ENCODE measurements at regions of chr11 and their contacts with region 1.

Region 1: GRCh38 chr11:64778508-64779346 is at the start of gene SF1:
- DNase-seq: peak; percentile 99
- ATAC-seq: peak; percentile 91
- H3K4me3 Mint-ChIP-seq: peak within 1 kb of the TSS; percentile 97
- H3K27ac Mint-ChIP-seq: peak within 1 kb of the TSS; percentile 99
- H3K4me1 Mint-ChIP-seq: peaks cover 57% of the 10 kb centered on the region
- H3K27me3 Mint-ChIP-seq: no peaks in the 10 kb centered on the region
- total RNA-seq, gene SF1: 318 to 362 TPM

Region 2: DNA sequence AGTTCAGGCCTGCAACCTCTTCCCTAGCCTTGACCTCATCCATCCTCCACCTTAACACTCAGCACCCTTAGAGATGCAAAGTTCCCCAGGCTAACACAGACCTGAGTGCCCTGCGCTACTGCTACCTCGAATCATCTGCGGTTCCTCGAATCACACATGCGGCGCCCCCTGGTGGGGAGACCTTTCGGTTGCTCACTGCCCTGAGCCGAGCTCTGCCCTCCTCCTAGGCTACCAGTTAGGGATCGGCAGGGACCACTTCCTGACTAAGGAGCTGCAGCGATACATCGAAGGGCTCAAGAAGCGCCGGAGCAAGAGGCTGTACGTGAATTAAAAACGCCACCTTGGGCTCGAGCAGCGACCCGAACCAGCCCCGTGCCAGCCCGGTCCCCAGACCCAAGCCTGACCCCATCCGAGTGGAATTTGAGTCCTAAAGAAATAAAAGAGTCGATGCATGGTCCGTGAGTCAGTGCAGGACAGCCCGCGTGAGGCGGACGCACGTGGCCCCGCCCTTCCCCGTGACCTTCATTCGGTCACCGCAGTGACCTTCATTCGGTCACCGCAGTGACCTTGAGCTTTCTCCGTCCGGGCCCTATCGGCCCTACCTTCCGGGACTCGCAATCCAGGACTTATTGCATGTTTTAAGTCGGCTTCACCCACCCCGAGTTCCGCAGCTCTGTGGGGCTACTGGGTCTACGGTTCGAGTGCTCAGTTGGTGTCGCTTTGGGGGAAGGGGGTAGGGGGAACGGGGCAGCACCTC is 474.2 kb before region 1 on chr11:
- CTCF ChIA-PET with region 1: interaction called, 5 read pairs
- POLR2A ChIA-PET with region 1: interaction called, 5 read pairs
- intact Hi-C with region 1: loop called in 1 of 2 experiments (anchors 1 kb)
- DNase-seq: peak; percentile 99
- ATAC-seq: peak; percentile 49
- H3K4me3 Mint-ChIP-seq: peak overlapping the region; percentile 100
- H3K27ac Mint-ChIP-seq: peak overlapping the region; percentile 95
- H3K4me1 Mint-ChIP-seq: peaks cover 34% of the 10 kb centered on the region
- H3K27me3 Mint-ChIP-seq: peaks cover 14% of the 10 kb centered on the region

Region 3: GRCh38 chr11:64767344-64768299 is 11.1 kb before region 1 on chr11:
- CTCF ChIA-PET with region 1: interaction called, 38 read pairs
- POLR2A ChIA-PET with region 1: interaction called, 17 read pairs
- intact Hi-C with region 1: loop called in 1 of 2 experiments (anchors 1 kb)
- DNase-seq: peak; percentile 90
- ATAC-seq: peak; percentile 50
- H3K4me3 Mint-ChIP-seq: no peak overlapping the region
- H3K27ac Mint-ChIP-seq: peak overlapping the region; percentile 88
- H3K4me1 Mint-ChIP-seq: peaks cover 91% of the 10 kb centered on the region
- H3K27me3 Mint-ChIP-seq: no peaks in the 10 kb centered on the region

Region 4: GRCh38 chr11:64878494-64879243 is 99.9 kb after region 1 on chr11 and contains the start of gene EHD1:
- CTCF ChIA-PET with region 1: no interaction called
- POLR2A ChIA-PET with region 1: no interaction called
- intact Hi-C with region 1: loop called (anchors 1 to 5 kb)
- DNase-seq: peak; percentile 100
- ATAC-seq: peak; percentile 85
- H3K4me3 Mint-ChIP-seq: peak within 1 kb of the TSS; percentile 92
- H3K27ac Mint-ChIP-seq: peak within 1 kb of the TSS; percentile 97
- H3K4me1 Mint-ChIP-seq: peaks cover 60% of the 10 kb centered on the region
- H3K27me3 Mint-ChIP-seq: no peaks in the 10 kb centered on the region
- total RNA-seq, gene EHD1: 71.0 to 73.6 TPM

Region 5: DNA sequence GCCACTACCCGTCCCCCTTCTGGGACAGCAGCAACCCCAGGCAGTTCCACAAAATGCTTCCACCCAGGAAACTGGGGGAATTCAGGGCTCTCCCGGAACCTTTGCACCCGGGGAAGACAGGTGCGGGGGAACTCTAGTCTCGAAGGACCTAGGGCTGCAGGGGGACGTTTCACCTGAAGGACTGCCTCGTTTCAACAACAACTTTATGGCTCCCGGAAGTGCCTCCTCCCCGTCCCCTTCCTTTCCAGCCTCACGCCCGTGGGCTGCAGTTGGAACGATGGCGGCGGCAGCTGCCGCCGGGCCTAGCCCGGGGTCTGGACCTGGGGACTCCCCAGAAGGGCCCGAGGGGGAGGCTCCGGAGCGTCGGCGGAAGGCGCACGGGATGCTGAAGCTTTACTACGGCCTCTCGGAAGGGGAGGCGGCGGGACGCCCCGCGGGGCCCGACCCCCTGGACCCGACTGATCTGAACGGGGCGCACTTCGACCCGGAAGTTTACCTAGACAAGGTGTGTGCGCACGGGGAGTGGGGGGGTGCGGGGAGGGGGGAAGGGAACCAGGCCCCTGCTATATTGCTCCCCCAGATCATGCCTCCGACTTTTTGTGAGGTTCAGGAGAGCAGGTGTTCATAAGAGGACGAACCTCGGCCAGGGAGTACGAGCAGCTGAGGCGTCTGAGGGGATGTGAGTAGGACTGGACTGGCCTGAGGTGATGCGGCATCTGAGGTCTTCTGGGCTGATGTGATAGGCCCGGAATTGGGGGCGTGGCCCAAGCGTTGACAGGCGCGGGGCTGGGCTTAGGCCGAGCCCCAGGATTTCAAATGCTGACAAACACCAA is 317.5 kb after region 1 on chr11 and contains the start of gene VPS51:
- CTCF ChIA-PET with region 1: no interaction called
- POLR2A ChIA-PET with region 1: no interaction called
- intact Hi-C with region 1: loop called in 1 of 2 experiments (anchors 1 kb)
- DNase-seq: peak; percentile 93
- ATAC-seq: peak; percentile 98
- H3K4me3 Mint-ChIP-seq: peak within 1 kb of the TSS; percentile 92
- H3K27ac Mint-ChIP-seq: peak within 1 kb of the TSS; percentile 94
- H3K4me1 Mint-ChIP-seq: peaks cover 12% of the 10 kb centered on the region
- H3K27me3 Mint-ChIP-seq: no peaks in the 10 kb centered on the region
- total RNA-seq, gene VPS51: 94.3 to 123 TPM

Region 6: DNA sequence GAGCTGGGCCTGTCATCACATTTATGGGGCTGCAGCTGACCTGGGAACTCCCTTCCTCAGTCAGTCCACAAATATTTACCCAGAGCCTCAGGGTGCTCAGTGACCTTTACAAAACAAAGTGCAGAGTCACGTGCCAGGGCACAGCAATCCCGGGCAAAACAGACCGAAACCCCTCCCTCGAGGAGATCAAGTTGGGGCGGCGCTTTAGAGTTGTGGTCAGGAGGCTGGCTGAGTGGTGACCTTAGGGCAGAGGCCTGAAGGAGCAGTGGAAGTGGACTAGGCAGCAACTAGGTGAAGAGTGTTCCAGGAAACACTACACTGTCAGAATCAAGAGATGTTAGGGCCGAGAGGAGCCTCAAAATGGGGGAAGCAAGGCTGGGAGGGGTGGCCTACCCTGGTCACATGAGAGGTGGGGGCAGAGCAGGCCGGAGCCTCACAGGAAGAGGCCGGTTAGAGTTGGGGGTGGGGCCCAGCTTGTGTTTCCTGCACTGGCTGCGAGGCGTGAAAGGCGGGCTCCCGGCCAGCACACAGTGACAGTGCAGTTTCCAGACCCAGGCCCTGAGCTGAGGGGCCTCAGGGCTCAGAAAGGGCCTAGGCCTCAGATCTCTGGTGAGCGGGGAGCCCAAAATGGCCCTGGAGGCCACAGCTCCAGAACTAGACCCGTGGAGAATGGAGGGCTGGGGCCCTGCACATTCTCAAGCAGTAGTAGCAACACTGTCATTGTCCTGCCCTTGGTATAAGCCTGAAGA is 640.2 kb after region 1 on chr11:
- CTCF ChIA-PET with region 1: no interaction called
- POLR2A ChIA-PET with region 1: interaction called, 5 read pairs
- intact Hi-C with region 1: loop called in 1 of 2 experiments (anchors 2 kb)
- DNase-seq: peak; percentile 97
- ATAC-seq: peak; percentile 48
- H3K4me3 Mint-ChIP-seq: peak overlapping the region; percentile 100
- H3K27ac Mint-ChIP-seq: peak overlapping the region; percentile 99
- H3K4me1 Mint-ChIP-seq: peaks cover 34% of the 10 kb centered on the region
- H3K27me3 Mint-ChIP-seq: peaks cover 6% of the 10 kb centered on the region

Measured in activated CD4-positive, alpha-beta T cell treated with anti-CD3 and anti-CD28 coated beads for 36 hours (primary cell).